ENCODE measurements at regions of chr5 and their contacts with region 1.

Region 1: DNA sequence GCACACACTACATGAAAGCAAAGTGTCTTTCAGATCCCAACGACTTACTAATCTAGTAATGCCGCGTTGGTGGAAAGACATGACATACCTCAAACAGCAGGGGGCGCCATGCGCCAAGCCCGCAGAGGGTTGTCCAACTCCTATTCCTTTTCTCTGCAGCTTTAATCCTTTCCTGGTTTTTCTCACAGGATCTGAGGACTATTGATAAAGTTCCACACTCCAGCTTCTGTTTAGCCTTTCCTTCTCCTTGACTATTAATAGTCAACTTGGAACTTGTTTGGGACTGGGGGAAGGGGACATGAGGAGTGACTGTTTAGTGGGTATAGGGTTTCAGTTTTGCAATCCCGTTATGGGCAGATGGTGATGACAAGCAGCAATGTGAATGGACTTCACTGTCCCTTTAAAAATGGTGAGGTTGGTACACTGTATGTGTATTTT is 62.9 kb downstream of the OTULIN start:
- H3K4me3 Mint-ChIP-seq: no peak overlapping the region
- H3K27ac Mint-ChIP-seq: no peak overlapping the region
- H3K4me1 Mint-ChIP-seq: peaks cover 45% of the 10 kb centered on the region
- H3K27me3 Mint-ChIP-seq: peaks cover 5% of the 10 kb centered on the region

Region 2: GRCh38 chr5:14640765-14641164 is 86.7 kb before region 1 on chr5:
- intact Hi-C with region 1: no loop called
- H3K4me3 Mint-ChIP-seq: no peak overlapping the region
- H3K27ac Mint-ChIP-seq: no peak overlapping the region
- H3K4me1 Mint-ChIP-seq: no peaks in the 10 kb centered on the region
- H3K27me3 Mint-ChIP-seq: no peaks in the 10 kb centered on the region

Region 3: DNA sequence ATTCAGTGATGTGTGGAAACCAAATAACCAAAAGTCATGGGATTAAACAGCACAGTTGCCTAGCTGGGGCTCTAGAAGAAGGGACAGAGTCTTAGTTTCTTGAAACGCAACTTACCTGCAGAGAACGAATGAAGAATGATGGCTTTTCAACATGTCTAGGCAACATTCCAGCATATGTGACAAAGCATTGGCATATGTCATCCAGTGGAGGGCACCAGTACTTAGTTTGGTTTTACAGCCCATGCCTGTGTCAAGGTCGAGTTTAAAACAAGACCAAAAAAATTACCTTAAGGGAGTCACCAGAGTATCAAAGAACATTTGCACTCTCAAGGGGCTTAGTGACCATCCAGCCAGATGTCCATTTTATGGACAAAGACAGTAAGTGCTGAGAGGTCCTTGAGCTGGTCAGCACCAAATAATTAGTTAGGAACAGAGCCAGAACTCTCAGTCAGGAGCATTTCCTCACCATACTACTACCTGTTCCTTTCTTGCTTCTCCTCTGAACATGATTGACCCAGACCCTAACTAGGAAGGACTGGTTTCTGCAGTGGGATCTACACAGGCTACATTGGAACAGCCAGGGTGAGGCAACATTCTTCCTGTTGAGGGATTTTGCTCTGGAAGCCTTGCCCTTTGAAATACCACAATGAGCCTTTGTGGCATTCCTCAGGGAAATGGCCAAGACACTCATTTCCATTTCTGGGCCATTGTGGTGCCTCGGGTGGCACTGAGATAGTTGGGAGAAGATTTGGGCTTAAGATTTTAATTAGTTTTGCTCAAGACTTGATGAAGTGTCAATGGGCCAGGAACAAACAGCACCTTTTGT is 219.6 kb after region 1 on chr5:
- intact Hi-C with region 1: loop called (anchors 10 kb)
- H3K4me3 Mint-ChIP-seq: no peak overlapping the region
- H3K27ac Mint-ChIP-seq: no peak overlapping the region
- H3K4me1 Mint-ChIP-seq: peaks cover 6% of the 10 kb centered on the region
- H3K27me3 Mint-ChIP-seq: peaks cover 15% of the 10 kb centered on the region

Region 4: GRCh38 chr5:15003511-15003920 is 276.1 kb after region 1 on chr5:
- intact Hi-C with region 1: loop called (anchors 5 kb)
- H3K4me3 Mint-ChIP-seq: no peak overlapping the region
- H3K27ac Mint-ChIP-seq: no peak overlapping the region
- H3K4me1 Mint-ChIP-seq: peaks cover 49% of the 10 kb centered on the region
- H3K27me3 Mint-ChIP-seq: peaks cover 18% of the 10 kb centered on the region

Measured in dendritic cell treated with granulocyte-macrophage colony-stimulating factor and Interleukin-4, amounts not matched to agents 40 ng/mL and 50 ng/mL, for 4 days (primary cell).